ENCODE measurements at regions of chr21 and their contacts with region 1.

Region 1: DNA sequence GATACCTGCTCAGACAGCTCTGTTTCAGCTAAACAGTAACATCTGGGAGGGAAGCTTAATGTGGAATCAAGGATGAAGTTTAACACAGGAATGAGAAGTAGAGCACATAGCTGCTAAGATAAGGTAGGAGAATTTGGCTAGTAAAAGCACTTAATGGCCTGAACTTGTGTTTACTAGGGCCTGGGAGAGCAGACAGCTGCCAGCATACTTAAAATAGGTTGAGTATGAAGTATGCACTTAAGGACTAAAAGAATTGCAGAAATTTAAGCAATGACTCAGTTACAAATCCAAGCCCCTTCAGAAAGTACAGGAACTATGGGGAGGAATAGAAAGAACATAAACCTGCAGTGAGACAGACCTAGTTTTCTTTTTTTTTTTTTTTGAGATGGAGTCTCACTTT is 53.0 kb downstream of the BACH1 start:
- DNase-seq: no peak
- H3K4me3 ChIP-seq: no peak overlapping the region
- H3K27ac ChIP-seq: no peak overlapping the region
- H3K4me1 ChIP-seq: no peaks in the 10 kb centered on the region
- H3K27me3 ChIP-seq: no peaks in the 10 kb centered on the region
- CTCF ChIP-seq: no peak
- EP300 ChIP-seq: no peak
- POLR2A ChIP-seq: no peak
- RAD21 ChIP-seq: no peak

Region 2: GRCh38 chr21:29085106-29085752 is 266.5 kb before region 1 on chr21:
- CTCF ChIA-PET with region 1: interaction called, 15 read pairs
- POLR2A ChIA-PET with region 1: no interaction called
- DNase-seq: no peak
- H3K4me3 ChIP-seq: no peak overlapping the region
- H3K27ac ChIP-seq: no peak overlapping the region
- H3K4me1 ChIP-seq: peaks cover 0 to 3% (median 0%) of the 10 kb centered on the region in 4 experiments; a peak in 1 of 7 replicates
- H3K27me3 ChIP-seq: no peaks in the 10 kb centered on the region; a peak in 1 of 7 replicates
- CTCF ChIP-seq: no peak
- EP300 ChIP-seq: no peak
- POLR2A ChIP-seq: no peak
- RAD21 ChIP-seq: no peak

Region 3: DNA sequence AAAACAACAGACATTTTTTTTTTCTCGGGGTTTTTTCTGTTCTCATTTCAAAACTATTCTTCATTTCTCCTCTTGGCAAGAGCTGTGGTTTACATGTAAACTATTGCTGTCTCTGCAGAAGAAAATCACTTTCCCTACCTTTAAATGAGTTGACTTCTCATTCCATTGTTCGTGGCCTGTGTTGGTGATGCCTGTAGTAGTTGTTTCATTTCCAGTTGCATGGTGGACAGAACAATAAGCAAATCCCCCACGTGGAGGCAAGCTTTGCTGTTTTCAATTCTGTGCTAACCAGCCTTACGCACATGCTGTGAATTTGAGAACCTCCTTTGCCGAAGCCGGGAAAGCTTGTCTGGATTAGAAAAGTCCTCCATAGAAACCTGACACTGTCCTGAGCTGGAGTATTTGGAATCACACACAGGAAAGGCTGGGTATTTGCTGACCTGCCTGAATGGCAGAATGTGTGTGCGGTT is 247.4 kb before region 1 on chr21:
- CTCF ChIA-PET with region 1: interaction called, 16 read pairs
- POLR2A ChIA-PET with region 1: no interaction called
- DNase-seq: no peak
- H3K4me3 ChIP-seq: no peak overlapping the region
- H3K27ac ChIP-seq: no peak overlapping the region
- H3K4me1 ChIP-seq: no peaks in the 10 kb centered on the region
- H3K27me3 ChIP-seq: no peaks in the 10 kb centered on the region
- CTCF ChIP-seq: no peak
- EP300 ChIP-seq: no peak
- POLR2A ChIP-seq: no peak
- RAD21 ChIP-seq: no peak